ENCODE measurements at regions of chr17 and their contacts with region 1.

Region 1: DNA sequence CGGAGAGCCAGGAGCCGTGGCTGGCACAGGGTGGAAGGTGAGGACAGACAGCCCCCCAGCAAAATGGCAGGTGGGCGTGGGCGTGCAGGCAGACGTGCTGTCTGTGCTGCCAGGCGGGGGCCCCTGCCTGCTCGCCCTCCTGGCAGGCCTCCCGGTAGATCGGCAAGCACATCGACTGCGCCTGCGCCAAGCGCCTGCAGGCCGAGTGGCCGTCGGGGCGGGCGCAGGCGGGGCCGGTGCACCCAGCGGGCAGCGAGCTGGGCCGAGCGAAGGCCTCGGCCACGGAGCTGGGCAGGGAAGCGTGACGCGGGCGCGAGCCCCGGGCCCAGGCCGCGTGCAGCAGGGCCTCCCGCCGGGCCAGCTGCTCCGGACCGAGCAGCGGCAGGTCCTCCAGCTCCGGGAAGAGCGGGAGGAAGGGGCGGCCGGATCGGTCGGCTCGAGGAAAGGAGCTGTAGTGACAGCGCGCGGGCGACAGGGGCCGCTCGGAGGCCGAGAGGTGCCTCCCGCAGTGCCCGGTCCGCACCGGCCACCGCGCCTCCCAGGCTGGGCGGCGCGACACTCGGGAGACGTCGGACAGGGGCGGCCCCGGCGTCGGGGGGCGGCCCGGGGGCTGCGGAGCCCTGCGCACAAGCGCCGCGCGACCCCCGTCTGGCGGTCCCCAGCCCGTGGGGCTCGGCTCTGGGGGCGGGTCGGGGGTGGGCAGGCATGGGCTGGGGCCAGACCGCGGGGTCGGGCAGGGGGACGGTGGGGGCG is 16.9 kb downstream of the GRIN2C start:
- DNase-seq: peak; percentile 82
- H3K4me3 ChIP-seq: peak overlapping the region in 1 of 3 experiments; percentile 43
- H3K27ac ChIP-seq: no peak overlapping the region
- H3K4me1 ChIP-seq: no peaks in the 10 kb centered on the region
- H3K27me3 ChIP-seq: no peaks in the 10 kb centered on the region
- CTCF ChIP-seq: peak; percentile 50 to 64
- POLR2A ChIP-seq: no peak

Region 2: GRCh38 chr17:74782571-74782970 is 60.2 kb before region 1 on chr17:
- CTCF ChIA-PET with region 1: no interaction called
- POLR2A ChIA-PET with region 1: no interaction called
- dilution Hi-C with region 1: no loop called
- intact Hi-C with region 1: no loop called
- DNase-seq: no peak
- H3K4me3 ChIP-seq: no peak overlapping the region
- H3K27ac ChIP-seq: no peak overlapping the region
- H3K4me1 ChIP-seq: no peaks in the 10 kb centered on the region
- H3K27me3 ChIP-seq: no peaks in the 10 kb centered on the region
- CTCF ChIP-seq: no peak
- POLR2A ChIP-seq: no peak

Region 3: GRCh38 chr17:74825952-74826719 is 16.6 kb before region 1 on chr17:
- CTCF ChIA-PET with region 1: interaction called, 23 read pairs
- POLR2A ChIA-PET with region 1: interaction called, 3 read pairs
- dilution Hi-C with region 1: no loop called
- intact Hi-C with region 1: no loop called
- DNase-seq: peak; percentile 77
- H3K4me3 ChIP-seq: no peak overlapping the region
- H3K27ac ChIP-seq: no peak overlapping the region
- H3K4me1 ChIP-seq: peaks cover 13% of the 10 kb centered on the region
- H3K27me3 ChIP-seq: no peaks in the 10 kb centered on the region
- CTCF ChIP-seq: no peak
- POLR2A ChIP-seq: no peak

Region 4: DNA sequence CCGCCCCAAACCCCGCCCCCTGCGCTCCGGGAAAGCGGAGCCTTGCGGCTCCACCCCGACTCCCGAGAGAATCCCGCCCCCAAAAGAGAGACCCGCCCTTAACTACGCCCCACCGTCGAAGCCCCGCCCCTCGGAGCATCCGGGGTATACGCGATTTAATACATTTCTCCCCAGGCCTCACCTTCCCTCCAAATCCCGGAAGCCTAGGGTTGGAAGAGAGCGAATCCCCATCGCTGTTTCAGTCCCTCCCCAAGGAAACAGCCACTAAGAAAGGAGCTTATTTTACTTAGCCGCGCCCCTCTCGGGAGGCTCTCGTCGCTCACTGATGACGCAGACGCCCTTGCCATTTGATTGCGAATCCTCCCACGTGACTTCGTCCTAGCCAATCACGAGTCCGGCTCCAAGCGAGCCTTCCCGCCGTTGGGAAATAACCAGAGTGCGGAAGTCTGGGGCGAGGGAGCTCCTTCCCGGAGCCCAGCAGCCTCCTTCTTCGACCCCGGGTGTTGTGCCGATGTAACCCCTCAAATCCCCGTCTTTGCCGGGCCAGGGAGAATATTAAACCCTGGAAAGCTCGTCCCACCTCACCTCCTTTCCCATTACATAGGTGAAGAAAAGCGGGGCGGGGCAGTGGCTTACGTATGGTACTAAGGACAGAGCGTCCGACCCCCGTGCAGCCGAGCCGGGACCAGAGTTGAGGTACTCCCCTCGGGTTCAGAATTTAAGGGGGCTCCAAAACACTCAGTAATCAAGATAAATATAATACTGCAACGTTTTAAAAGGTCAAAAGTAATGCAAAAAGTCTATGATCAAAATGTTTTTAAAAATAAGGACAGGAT is 30.5 kb after region 1 on chr17:
- CTCF ChIA-PET with region 1: interaction called, 12 read pairs
- POLR2A ChIA-PET with region 1: interaction called, 8 read pairs
- dilution Hi-C with region 1: no loop called
- intact Hi-C with region 1: no loop called
- DNase-seq: peak; percentile 100
- H3K4me3 ChIP-seq: peak overlapping the region; percentile 67 to 83 (median 70)
- H3K27ac ChIP-seq: peak overlapping the region; percentile 75
- H3K4me1 ChIP-seq: peaks cover 25% of the 10 kb centered on the region
- H3K27me3 ChIP-seq: no peaks in the 10 kb centered on the region
- CTCF ChIP-seq: no peak
- POLR2A ChIP-seq: peak; percentile 88

Region 5: DNA sequence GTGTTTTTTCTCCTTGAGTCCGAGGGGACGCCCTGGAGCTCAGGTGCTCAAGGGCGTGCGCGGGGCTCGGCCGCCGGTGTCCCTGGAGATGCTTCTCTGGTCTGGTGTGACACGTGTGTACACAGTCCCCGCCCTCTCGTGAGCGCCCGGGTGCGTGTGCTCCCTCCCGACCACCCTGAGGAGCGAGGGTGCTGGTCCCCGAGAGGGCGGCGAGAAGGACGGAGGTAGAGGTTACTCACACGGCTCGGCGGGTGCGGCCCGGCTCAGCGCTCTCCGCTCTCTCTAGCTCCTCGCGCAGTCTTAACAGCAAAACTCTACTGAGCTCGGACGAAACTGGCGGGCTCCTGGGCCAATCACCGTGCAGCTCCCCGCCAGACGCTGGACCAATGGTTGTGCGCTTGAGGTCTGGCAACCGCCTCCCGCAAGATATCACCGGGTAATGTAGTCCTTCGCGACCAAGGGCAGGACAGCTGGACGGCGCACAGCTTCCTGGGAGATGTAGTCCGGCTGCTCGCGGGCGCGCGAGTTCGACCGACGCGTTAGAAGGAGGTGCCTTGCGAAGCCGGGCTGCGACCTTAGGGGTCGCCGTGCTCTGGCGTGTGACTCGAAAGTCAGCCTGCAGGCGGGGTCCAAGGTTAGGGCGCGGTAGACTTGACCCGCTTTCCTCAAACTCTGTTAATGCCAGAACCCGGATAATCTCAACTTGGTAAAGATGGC is 446.5 kb after region 1 on chr17 and contains the start of gene SLC25A19:
- CTCF ChIA-PET with region 1: no interaction called
- POLR2A ChIA-PET with region 1: no interaction called
- dilution Hi-C with region 1: no loop called
- intact Hi-C with region 1: no loop called
- DNase-seq: peak; percentile 100
- H3K4me3 ChIP-seq: peak within 1 kb of the TSS; percentile 66 to 85 (median 75)
- H3K27ac ChIP-seq: peak within 1 kb of the TSS; percentile 86
- H3K4me1 ChIP-seq: peaks cover 8% of the 10 kb centered on the region
- H3K27me3 ChIP-seq: no peaks in the 10 kb centered on the region
- CTCF ChIP-seq: no peak
- POLR2A ChIP-seq: peak; percentile 9
- total RNA-seq, gene SLC25A19: 16.8 and 20.9 TPM in 2 replicates